ENCODE measurements at regions of chr5 and their contacts with region 1.

Region 1: GRCh38 chr5:146130440-146131045 is 25.2 kb upstream of the PLAC8L1 start:
- DNase-seq: peak; percentile 4
- ATAC-seq: no peak
- H3K4me3 ChIP-seq: no peak overlapping the region
- H3K27ac ChIP-seq: no peak overlapping the region
- H3K4me1 ChIP-seq: no peaks in the 10 kb centered on the region
- H3K27me3 ChIP-seq: no peaks in the 10 kb centered on the region
- CTCF ChIP-seq: peak; percentile 52
- EP300 ChIP-seq: no peak
- POLR2A ChIP-seq: no peak
- RAD21 ChIP-seq: 0 out of 2 replicates have a peak, but pooled peaks have one; percentile 14

Region 2: DNA sequence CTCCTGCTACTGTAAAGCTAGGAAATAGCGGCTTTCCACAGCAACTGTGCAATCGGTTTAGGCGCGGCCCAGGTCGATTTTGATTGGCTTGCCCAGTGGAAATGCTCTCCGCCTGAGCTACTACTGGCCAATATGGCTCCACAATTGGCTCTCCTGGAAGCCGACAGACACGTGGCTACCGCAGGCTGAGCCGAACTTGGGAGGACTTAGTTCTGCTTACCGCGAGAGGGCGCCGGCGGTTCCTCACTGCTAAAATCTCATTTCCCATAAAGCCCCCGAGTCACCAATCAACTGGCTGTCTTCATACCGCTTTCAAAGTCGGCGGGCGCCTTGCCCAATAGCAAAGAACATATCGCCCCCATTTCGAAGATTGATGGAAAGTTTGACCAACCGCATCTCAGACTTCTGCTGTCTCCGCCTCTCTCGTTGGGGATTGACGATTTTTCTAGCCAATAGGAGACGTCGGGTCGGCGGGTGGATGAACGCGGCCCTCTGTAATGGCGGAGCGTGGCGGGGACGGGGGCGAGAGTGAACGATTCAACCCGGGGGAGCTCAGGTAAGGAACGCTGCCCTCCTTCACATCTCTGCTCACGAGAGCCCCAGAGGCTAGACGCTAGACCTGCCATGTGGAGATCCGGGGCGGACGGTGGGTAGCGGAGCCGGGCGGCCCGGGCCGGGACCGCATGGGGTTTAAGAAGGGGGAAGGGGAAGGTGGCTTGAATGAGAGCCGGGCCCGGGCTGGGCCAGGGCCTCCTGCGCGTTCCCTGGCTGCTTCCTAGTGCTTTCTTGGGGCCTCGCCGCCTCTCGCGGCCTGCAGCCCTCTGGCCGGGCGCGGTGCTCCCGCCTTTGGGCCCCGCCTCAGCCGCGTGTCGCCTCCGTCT is 316.6 kb after region 1 on chr5 and contains the start of gene TCERG1:
- CTCF ChIA-PET with region 1: no interaction called
- POLR2A ChIA-PET with region 1: no interaction called
- in situ Hi-C with region 1: loop called (anchors 25 kb)
- intact Hi-C with region 1: no loop called
- DNase-seq: peak; percentile 99
- ATAC-seq: peak; percentile 95
- H3K4me3 ChIP-seq: peak within 1 kb of the TSS; percentile 81 to 95 (median 81)
- H3K27ac ChIP-seq: peak within 1 kb of the TSS; percentile 88
- H3K4me1 ChIP-seq: peaks cover 40% of the 10 kb centered on the region
- H3K27me3 ChIP-seq: no peaks in the 10 kb centered on the region; a peak in 1 of 5 replicates
- CTCF ChIP-seq: peak; percentile 90
- EP300 ChIP-seq: no peak
- POLR2A ChIP-seq: peak; percentile 70 to 85
- RAD21 ChIP-seq: peak; percentile 45
- total RNA-seq, gene TCERG1: 71.5 and 71.7 TPM in 2 replicates

Measured in HepG2 (cell line).